ENCODE measurements at regions of chr6 and their contacts with region 1.

Region 1: DNA sequence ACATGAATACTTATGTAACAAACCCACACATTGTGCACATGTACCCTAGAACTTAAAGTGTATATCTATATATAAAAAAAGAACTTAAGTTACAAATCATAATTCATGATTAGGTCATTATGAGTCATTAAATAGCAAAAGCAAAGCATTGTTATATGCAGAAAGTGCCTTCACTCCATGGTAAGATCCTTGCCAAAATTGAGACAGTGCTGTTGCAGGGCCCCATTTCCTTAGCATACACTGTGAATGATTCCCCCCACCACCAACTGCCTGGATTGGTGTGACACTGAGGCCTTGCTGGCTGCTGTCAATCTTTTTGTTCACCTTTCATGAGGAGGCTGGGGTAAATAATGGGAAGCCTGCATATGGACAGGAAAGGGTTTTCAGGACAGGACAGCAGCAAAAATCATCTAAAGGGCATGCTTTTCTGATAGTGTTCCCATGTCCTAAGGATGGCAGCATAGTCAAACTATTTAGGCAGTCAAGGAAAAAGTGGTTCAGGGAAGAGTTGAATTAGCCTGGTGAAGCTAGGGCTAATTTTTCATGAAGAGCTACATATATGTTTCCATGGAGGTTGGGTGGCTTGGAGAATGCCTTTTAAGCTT is 188.2 kb upstream of the ASCC3 start:
- DNase-seq: peak; percentile 78
- ATAC-seq: peak; percentile 99
- H3K4me3 ChIP-seq: no peak overlapping the region
- H3K27ac ChIP-seq: peak overlapping the region; percentile 82
- H3K4me1 ChIP-seq: peaks cover 8% of the 10 kb centered on the region
- H3K27me3 ChIP-seq: no peaks in the 10 kb centered on the region
- CTCF ChIP-seq: peak; percentile 43; the same call in 1 of the 2 replicates

Region 2: GRCh38 chr6:100780678-100781077 is 288.6 kb before region 1 on chr6:
- CTCF ChIA-PET with region 1: no interaction called
- POLR2A ChIA-PET with region 1: no interaction called
- intact Hi-C with region 1: loop called (anchors 2 kb)
- DNase-seq: peak; percentile 66
- ATAC-seq: peak; percentile 96
- H3K4me3 ChIP-seq: no peak overlapping the region
- H3K27ac ChIP-seq: peak overlapping the region; percentile 88
- H3K4me1 ChIP-seq: peaks cover 13% of the 10 kb centered on the region
- H3K27me3 ChIP-seq: no peaks in the 10 kb centered on the region
- CTCF ChIP-seq: no peak

Measured in PC-3 (cell line).